Activated B cell treated with CpG ODN at 0.5 μM for 24 hours (primary cell): ENCODE measurements at regions of chr20 and their contacts with region 1.

Region 1: DNA sequence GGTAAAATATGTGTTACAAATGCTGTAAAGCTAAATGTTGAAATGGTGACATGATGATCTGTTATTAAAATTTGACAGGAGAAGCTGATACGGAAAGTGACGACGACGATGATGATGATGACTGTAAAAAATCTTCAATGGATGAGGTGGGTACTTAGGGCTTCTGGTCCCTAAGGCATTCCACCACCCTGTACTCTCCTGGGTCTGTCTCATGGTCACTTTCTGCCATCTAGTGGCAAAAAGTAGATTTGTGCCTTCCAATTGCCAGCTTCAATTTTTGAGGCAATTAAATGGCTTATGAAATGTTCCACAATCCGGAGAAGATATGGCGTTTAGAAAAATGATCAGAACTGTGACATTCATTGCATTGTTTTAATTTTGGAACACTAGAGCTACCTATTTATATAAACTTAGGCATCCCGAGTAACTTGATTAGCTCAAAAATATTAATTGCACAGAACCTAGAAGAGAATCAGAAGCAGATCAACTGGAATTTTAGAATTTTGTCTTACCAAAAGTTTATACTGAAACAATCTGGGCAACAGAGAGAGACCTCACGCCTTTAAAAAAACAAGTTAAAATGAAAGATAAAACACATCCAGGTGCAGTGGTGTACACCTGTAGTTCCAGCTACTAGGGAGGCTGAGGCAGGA is 346.5 kb upstream of the PLCB4 start:
- DNase-seq: no peak
- ATAC-seq: no peak
- H3K4me3 Mint-ChIP-seq: no peak overlapping the region
- H3K27ac Mint-ChIP-seq: no peak overlapping the region
- H3K4me1 Mint-ChIP-seq: no peaks in the 10 kb centered on the region
- H3K27me3 Mint-ChIP-seq: no peaks in the 10 kb centered on the region
- CTCF ChIP-seq: no peak

Region 2: DNA sequence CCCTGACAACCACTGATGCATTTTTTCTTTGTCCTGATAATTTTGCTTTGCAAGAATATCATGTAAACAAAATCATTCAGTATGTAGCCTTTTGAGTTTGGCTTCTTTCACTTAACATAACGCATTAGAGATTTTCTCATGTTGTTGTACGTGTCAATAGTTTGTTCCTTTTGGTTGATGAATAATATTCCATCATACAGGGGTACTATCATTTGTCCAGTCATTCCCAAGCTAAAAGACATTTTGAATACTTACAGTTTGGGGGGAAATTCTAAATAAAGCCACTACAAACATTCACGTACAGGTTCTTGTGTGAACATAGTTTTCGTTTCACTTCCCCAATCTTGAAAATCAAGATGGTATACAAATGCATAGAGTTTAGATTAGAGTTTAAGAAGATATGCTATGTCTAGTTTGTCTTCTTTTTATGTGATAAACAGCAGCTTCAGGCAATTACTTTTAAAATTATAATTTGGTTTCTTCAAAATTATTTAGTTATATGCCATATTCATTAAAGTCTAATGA is 787.3 kb before region 1 on chr20:
- CTCF ChIA-PET with region 1: interaction called, 55 read pairs
- POLR2A ChIA-PET with region 1: no interaction called
- intact Hi-C with region 1: no loop called
- DNase-seq: no peak
- ATAC-seq: no peak
- H3K4me3 Mint-ChIP-seq: no peak overlapping the region
- H3K27ac Mint-ChIP-seq: no peak overlapping the region
- H3K4me1 Mint-ChIP-seq: peaks cover 15% of the 10 kb centered on the region
- H3K27me3 Mint-ChIP-seq: peaks cover 2% of the 10 kb centered on the region
- CTCF ChIP-seq: no peak

Region 3: GRCh38 chr20:8043687-8044282 is 678.6 kb before region 1 on chr20:
- CTCF ChIA-PET with region 1: interaction called, 98 read pairs
- POLR2A ChIA-PET with region 1: no interaction called
- intact Hi-C with region 1: loop called (anchors 1 kb)
- DNase-seq: no peak
- ATAC-seq: peak; percentile 70
- H3K4me3 Mint-ChIP-seq: no peak overlapping the region
- H3K27ac Mint-ChIP-seq: no peak overlapping the region
- H3K4me1 Mint-ChIP-seq: peaks cover 1% of the 10 kb centered on the region
- H3K27me3 Mint-ChIP-seq: peaks cover 6% of the 10 kb centered on the region
- CTCF ChIP-seq: peak; percentile 68

Region 4: GRCh38 chr20:8389381-8390036 is 332.9 kb before region 1 on chr20:
- CTCF ChIA-PET with region 1: interaction called, 18 read pairs
- POLR2A ChIA-PET with region 1: no interaction called
- intact Hi-C with region 1: loop called (anchors 1 kb)
- DNase-seq: no peak
- ATAC-seq: no peak
- H3K4me3 Mint-ChIP-seq: no peak overlapping the region
- H3K27ac Mint-ChIP-seq: no peak overlapping the region
- H3K4me1 Mint-ChIP-seq: no peaks in the 10 kb centered on the region
- H3K27me3 Mint-ChIP-seq: no peaks in the 10 kb centered on the region
- CTCF ChIP-seq: peak; percentile 39

Region 5: DNA sequence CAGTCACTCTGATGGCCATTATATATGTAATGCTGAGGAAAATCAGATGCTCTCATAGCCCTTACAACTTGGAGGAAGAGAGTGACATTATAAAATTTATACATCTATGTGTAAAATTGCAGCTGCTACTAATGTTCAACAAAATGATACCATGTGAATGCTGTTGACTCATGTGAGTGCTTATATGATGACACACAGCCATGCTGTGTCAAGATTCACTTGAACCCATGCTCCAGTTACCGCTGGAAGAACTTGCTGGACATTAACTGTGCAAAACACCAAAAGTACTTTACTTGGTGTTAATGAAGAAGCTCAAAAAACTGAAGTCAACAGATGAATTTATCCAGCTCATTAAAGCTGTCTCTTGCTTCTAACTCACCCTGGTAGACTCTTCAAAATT is 27.6 kb after region 1 on chr20:
- CTCF ChIA-PET with region 1: interaction called, 12 read pairs
- POLR2A ChIA-PET with region 1: no interaction called
- intact Hi-C with region 1: no loop called
- DNase-seq: no peak
- ATAC-seq: no peak
- H3K4me3 Mint-ChIP-seq: no peak overlapping the region
- H3K27ac Mint-ChIP-seq: no peak overlapping the region
- H3K4me1 Mint-ChIP-seq: no peaks in the 10 kb centered on the region
- H3K27me3 Mint-ChIP-seq: peaks cover 2% of the 10 kb centered on the region
- CTCF ChIP-seq: no peak

Region 6: DNA sequence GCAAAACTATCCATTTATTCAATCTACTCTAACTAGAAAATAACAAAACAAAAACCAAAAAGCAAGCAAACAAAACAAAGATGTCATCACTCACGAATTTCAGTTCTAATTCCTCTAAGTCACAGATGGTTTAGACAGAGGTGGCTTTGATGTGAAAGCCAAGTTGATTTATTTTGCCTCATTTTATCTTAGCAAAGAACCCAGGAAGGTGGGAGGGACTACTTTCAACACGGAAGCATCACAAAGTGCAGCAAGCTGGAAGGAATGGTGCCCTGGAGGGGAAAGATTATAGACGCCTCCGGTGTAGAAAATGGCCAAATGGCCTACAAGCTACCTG is 880.4 kb after region 1 on chr20:
- CTCF ChIA-PET with region 1: no interaction called
- POLR2A ChIA-PET with region 1: no interaction called
- intact Hi-C with region 1: no loop called
- DNase-seq: no peak
- ATAC-seq: no peak
- H3K4me3 Mint-ChIP-seq: no peak overlapping the region
- H3K27ac Mint-ChIP-seq: no peak overlapping the region
- H3K4me1 Mint-ChIP-seq: no peaks in the 10 kb centered on the region
- H3K27me3 Mint-ChIP-seq: peaks cover 22% of the 10 kb centered on the region
- CTCF ChIP-seq: no peak